Naive thymus-derived CD4-positive, alpha-beta T cell (primary cell): ENCODE measurements at regions of chr6 and their contacts with region 1.

Region 1: DNA sequence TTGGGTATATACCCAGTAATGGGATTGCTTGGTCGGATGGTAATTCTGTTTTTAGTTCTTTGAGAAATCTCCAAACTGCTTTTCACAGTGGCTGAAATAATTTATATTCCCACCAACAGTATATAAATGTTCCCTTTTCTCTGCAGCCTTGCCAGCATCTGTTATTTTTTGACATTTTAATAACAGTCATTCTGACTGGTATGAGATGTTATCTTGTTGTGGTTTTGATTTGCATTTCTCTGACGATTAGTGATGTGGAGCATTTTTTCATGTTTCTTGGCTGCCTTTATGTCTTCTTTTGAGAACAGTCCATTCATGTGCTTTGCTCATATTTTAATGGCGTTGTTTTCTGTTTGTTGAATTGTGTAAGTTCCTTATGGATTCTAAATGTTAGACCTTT is 641.6 kb downstream of the HACE1 start:
- DNase-seq: no peak
- ATAC-seq: no peak
- H3K4me3 ChIP-seq: no peak overlapping the region
- H3K4me3 Mint-ChIP-seq: no peak overlapping the region
- H3K27ac ChIP-seq: no peak overlapping the region
- H3K27ac Mint-ChIP-seq: no peak overlapping the region
- H3K4me1 ChIP-seq: no peaks in the 10 kb centered on the region
- H3K4me1 Mint-ChIP-seq: no peaks in the 10 kb centered on the region
- H3K27me3 ChIP-seq: no peaks in the 10 kb centered on the region
- H3K27me3 Mint-ChIP-seq: peaks cover 0 to 3% (median 0%) of the 10 kb centered on the region in 5 donors

Region 2: GRCh38 chr6:102832021-102832420 is 1386.1 kb before region 1 on chr6:
- CTCF ChIA-PET with region 1: no interaction called
- POLR2A ChIA-PET with region 1: no interaction called
- intact Hi-C with region 1: no loop called
- DNase-seq: no peak
- ATAC-seq: no peak
- H3K4me3 ChIP-seq: no peak overlapping the region
- H3K4me3 Mint-ChIP-seq: no peak overlapping the region
- H3K27ac ChIP-seq: no peak overlapping the region
- H3K27ac Mint-ChIP-seq: no peak overlapping the region
- H3K4me1 ChIP-seq: no peaks in the 10 kb centered on the region
- H3K4me1 Mint-ChIP-seq: no peaks in the 10 kb centered on the region
- H3K27me3 ChIP-seq: no peaks in the 10 kb centered on the region
- H3K27me3 Mint-ChIP-seq: no peaks in the 10 kb centered on the region

Region 3: DNA sequence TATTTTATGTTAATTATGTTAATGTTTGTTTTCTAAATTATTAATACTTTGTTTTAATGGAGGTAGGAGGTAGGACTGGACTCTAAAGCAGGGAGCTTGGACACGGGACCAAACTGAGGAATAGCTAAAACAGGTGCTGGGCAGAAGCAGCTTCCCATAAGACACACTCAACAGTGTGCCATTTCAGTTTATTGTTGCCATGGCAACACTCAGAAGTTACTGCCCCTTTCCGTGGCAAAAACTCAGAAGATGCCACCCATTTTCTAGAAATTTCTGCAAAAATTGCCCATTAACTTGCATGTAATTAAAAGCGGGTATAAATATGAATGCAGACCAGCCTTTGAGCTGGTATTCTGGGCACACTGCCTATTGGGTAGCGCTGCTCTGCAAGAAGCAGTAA is 763.4 kb before region 1 on chr6:
- CTCF ChIA-PET with region 1: no interaction called
- POLR2A ChIA-PET with region 1: no interaction called
- intact Hi-C with region 1: loop called in 1 of 2 experiments (anchors 10 kb)
- DNase-seq: no peak
- ATAC-seq: no peak
- H3K4me3 ChIP-seq: no peak overlapping the region
- H3K4me3 Mint-ChIP-seq: no peak overlapping the region
- H3K27ac ChIP-seq: no peak overlapping the region
- H3K27ac Mint-ChIP-seq: no peak overlapping the region
- H3K4me1 ChIP-seq: no peaks in the 10 kb centered on the region
- H3K4me1 Mint-ChIP-seq: no peaks in the 10 kb centered on the region
- H3K27me3 ChIP-seq: no peaks in the 10 kb centered on the region
- H3K27me3 Mint-ChIP-seq: no peaks in the 10 kb centered on the region

Region 4: GRCh38 chr6:105243487-105243886 is 1025.4 kb after region 1 on chr6:
- CTCF ChIA-PET with region 1: no interaction called
- POLR2A ChIA-PET with region 1: no interaction called
- intact Hi-C with region 1: no loop called
- DNase-seq: no peak
- ATAC-seq: no peak
- H3K4me3 ChIP-seq: no peak overlapping the region
- H3K4me3 Mint-ChIP-seq: no peak overlapping the region
- H3K27ac ChIP-seq: no peak overlapping the region
- H3K27ac Mint-ChIP-seq: no peak overlapping the region
- H3K4me1 ChIP-seq: no peaks in the 10 kb centered on the region
- H3K4me1 Mint-ChIP-seq: no peaks in the 10 kb centered on the region
- H3K27me3 ChIP-seq: no peaks in the 10 kb centered on the region
- H3K27me3 Mint-ChIP-seq: peaks cover 9 to 39% (median 30%) of the 10 kb centered on the region in 5 donors